ENCODE measurements at regions of chr12 and their contacts with region 1.

Region 1: DNA sequence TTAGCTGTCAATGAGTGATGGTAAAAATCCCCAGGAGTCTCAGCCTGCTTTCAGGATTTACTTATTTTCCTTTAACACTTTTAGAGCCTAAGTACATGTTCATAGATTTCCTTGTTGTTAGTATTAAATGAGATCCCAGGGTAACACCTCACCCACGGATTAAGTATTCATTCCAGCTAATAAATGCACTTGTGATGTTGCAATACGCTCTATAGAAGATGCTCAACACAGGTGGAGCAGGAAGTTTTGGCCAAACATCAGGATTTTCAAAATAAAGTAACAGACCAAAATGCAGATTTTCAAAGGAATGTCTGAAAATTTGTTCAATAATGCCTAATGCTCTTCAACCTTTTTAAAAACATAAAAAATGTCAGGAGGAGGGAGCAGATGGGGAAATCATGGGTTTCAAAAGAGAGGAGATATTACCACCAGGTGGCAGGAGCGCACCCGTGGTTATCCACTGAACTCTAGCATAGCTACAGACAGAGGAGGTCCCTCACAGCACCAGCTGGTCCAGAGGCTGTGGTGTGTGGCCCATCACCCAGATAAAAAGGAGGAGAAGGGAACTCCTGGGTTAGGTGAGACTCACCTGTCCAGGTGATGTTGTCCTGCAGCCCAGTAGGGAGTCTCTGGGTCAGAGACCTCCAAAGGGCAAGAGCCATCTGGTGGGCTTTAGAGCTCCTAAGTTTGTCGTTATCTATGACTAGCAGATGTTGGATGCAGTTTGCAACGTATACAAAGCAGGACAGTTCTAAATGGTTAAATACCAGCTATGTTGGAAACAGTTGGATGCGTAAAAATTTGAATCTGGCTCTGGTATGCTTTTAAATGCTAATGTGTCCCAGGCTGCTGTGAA is 1158.4 kb upstream of the TMEM132C start:
- DNase-seq: peak in 4 of 5 donors; percentile 39 to 64 (median 46)
- ATAC-seq: peak; percentile 69 to 81 (median 78)
- H3K4me3 ChIP-seq: no peak overlapping the region
- H3K27ac ChIP-seq: no peak overlapping the region
- H3K4me1 ChIP-seq: no peaks in the 10 kb centered on the region
- H3K27me3 ChIP-seq: peaks cover 0 to 3% (median 0%) of the 10 kb centered on the region in 9 donors
- CTCF ChIP-seq: peak; percentile 56 to 79 (median 70)
- POLR2A ChIP-seq: no peak

Region 2: GRCh38 chr12:127293507-127294310 is 185.1 kb after region 1 on chr12:
- intact Hi-C with region 1: loop called in 8 of 10 experiments (anchors 1 to 10 kb)
- DNase-seq: peak in 4 of 5 donors; percentile 17 to 76 (median 40)
- ATAC-seq: peak in 3 of 4 donors; percentile 48 to 80 (median 59)
- H3K4me3 ChIP-seq: no peak overlapping the region
- H3K27ac ChIP-seq: no peak overlapping the region
- H3K4me1 ChIP-seq: no peaks in the 10 kb centered on the region
- H3K27me3 ChIP-seq: peaks cover 0 to 20% (median 0%) of the 10 kb centered on the region in 9 donors
- CTCF ChIP-seq: peak; percentile 32 to 71 (median 63)
- POLR2A ChIP-seq: no peak

Region 3: GRCh38 chr12:127381048-127381668 is 272.6 kb after region 1 on chr12:
- intact Hi-C with region 1: loop called (anchors 1 to 5 kb)
- DNase-seq: peak in 3 of 5 donors; percentile 9 to 29 (median 20)
- ATAC-seq: peak in 2 of 4 donors; percentile 68 to 77
- H3K4me3 ChIP-seq: peak overlapping the region in 4 of 12 donors; percentile 17 to 40 (median 28)
- H3K27ac ChIP-seq: no peak overlapping the region
- H3K4me1 ChIP-seq: peaks cover 0 to 6% (median 0%) of the 10 kb centered on the region in 12 donors
- H3K27me3 ChIP-seq: peaks cover 0 to 23% (median 0%) of the 10 kb centered on the region in 9 donors
- CTCF ChIP-seq: peak; percentile 68 to 87 (median 80)
- POLR2A ChIP-seq: no peak

Region 4: GRCh38 chr12:127677537-127678131 is 569.0 kb after region 1 on chr12:
- intact Hi-C with region 1: loop called in 6 of 10 experiments (anchors 5 to 10 kb)
- DNase-seq: peak; percentile 35 to 64 (median 53)
- ATAC-seq: peak; percentile 51 to 67 (median 60)
- H3K4me3 ChIP-seq: no peak overlapping the region
- H3K27ac ChIP-seq: no peak overlapping the region
- H3K4me1 ChIP-seq: peaks cover 0 to 8% (median 0%) of the 10 kb centered on the region in 12 donors
- H3K27me3 ChIP-seq: no peaks in the 10 kb centered on the region
- CTCF ChIP-seq: peak; percentile 53 to 85 (median 68)
- POLR2A ChIP-seq: no peak

Region 5: GRCh38 chr12:127925971-127926370 is 817.4 kb after region 1 on chr12:
- intact Hi-C with region 1: loop called in 2 of 10 experiments (anchors 2 to 10 kb)
- DNase-seq: peak in 2 of 5 donors; percentile 30 to 32
- ATAC-seq: peak; percentile 67 to 86 (median 76)
- H3K4me3 ChIP-seq: no peak overlapping the region
- H3K27ac ChIP-seq: no peak overlapping the region
- H3K4me1 ChIP-seq: peaks cover 0 to 18% (median 10%) of the 10 kb centered on the region in 12 donors
- H3K27me3 ChIP-seq: no peaks in the 10 kb centered on the region
- CTCF ChIP-seq: peak in 11 of 12 donors; percentile 13 to 74 (median 60)
- POLR2A ChIP-seq: no peak